B cell (primary cell): ENCODE measurements at regions of chr14 and their contacts with region 1.

Region 1: GRCh38 chr14:92680781-92681650 is 67.4 kb downstream of the LGMN start:
- DNase-seq: peak; percentile 87
- ATAC-seq: peak; percentile 16
- H3K4me3 ChIP-seq: no peak overlapping the region
- H3K4me3 Mint-ChIP-seq: no peak overlapping the region
- H3K27ac ChIP-seq: peak overlapping the region; percentile 52 to 66
- H3K27ac Mint-ChIP-seq: peak overlapping the region; percentile 86
- H3K4me1 ChIP-seq: peaks cover 31% of the 10 kb centered on the region in 2 donors
- H3K4me1 Mint-ChIP-seq: peaks cover 38% of the 10 kb centered on the region
- H3K27me3 ChIP-seq: no peaks in the 10 kb centered on the region
- H3K27me3 Mint-ChIP-seq: no peaks in the 10 kb centered on the region
- CTCF ChIP-seq: peak; percentile 97

Region 2: DNA sequence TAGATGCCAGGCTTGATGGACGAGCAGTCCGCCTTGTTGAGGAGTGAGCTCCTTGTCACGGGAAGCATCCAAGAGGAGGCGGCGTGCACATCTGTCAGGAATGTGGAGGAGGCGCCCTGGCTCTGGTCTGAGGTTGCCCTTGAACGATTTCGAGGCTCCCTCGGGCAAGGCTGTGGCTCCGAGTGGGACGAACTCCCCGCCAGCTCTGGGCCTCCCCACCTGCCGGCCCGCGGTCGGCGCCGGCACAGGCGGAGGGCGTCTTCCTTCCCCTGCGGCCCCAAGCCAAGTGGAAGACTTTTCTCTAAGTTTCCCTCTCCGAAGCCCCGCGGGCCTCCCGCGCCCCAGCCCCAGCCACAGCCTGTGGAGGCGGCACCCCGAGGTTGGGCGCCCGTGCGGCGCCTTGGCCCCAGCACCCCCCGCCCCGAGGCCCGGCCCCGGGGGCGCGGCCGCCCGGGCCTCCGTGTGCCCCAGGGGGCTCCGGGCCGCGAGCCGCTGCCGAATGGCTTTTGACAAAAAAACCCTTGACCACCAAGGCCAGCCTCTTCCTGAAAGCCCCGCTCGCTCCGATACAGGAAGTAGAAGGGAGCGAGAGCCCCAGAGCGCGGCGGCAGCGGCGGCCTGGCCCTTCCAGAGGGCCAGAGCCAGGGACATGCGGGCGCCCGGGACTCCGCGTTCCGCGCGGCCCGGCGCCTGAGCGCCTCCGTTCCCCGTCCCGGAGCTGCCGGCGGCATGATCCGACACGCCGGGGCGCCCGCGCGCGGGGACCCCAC is 167.6 kb before region 1 on chr14 and contains the start of gene RIN3:
- CTCF ChIA-PET with region 1: no interaction called
- POLR2A ChIA-PET with region 1: no interaction called
- intact Hi-C with region 1: loop called (anchors 1 kb)
- DNase-seq: peak; percentile 68
- ATAC-seq: peak; percentile 64
- H3K4me3 ChIP-seq: peak within 1 kb of the TSS; percentile 39 to 79 (median 72)
- H3K4me3 Mint-ChIP-seq: peak within 1 kb of the TSS; percentile 83
- H3K27ac ChIP-seq: peak within 1 kb of the TSS; percentile 55 to 67
- H3K27ac Mint-ChIP-seq: peak within 1 kb of the TSS; percentile 79
- H3K4me1 ChIP-seq: peaks cover 33 to 55% of the 10 kb centered on the region in 2 donors
- H3K4me1 Mint-ChIP-seq: peaks cover 54% of the 10 kb centered on the region
- H3K27me3 ChIP-seq: peaks cover 0 to 6% (median 0%) of the 10 kb centered on the region in 4 experiments
- H3K27me3 Mint-ChIP-seq: no peaks in the 10 kb centered on the region
- CTCF ChIP-seq: no peak
- total RNA-seq, gene RIN3: 123 and 124 TPM in 2 replicates

Region 3: GRCh38 chr14:92585981-92586937 is 94.8 kb before region 1 on chr14:
- CTCF ChIA-PET with region 1: interaction called, 94 read pairs
- POLR2A ChIA-PET with region 1: interaction called, 4 read pairs
- intact Hi-C with region 1: loop called (anchors 1 kb)
- DNase-seq: no peak
- ATAC-seq: no peak
- H3K4me3 ChIP-seq: no peak overlapping the region
- H3K4me3 Mint-ChIP-seq: peak overlapping the region; percentile 20
- H3K27ac ChIP-seq: peak overlapping the region in 1 of 2 donors; percentile 5
- H3K27ac Mint-ChIP-seq: peak overlapping the region; percentile 72
- H3K4me1 ChIP-seq: peaks cover 61 to 74% of the 10 kb centered on the region in 2 donors
- H3K4me1 Mint-ChIP-seq: peaks cover 77% of the 10 kb centered on the region
- H3K27me3 ChIP-seq: no peaks in the 10 kb centered on the region
- H3K27me3 Mint-ChIP-seq: no peaks in the 10 kb centered on the region
- CTCF ChIP-seq: no peak

Region 4: DNA sequence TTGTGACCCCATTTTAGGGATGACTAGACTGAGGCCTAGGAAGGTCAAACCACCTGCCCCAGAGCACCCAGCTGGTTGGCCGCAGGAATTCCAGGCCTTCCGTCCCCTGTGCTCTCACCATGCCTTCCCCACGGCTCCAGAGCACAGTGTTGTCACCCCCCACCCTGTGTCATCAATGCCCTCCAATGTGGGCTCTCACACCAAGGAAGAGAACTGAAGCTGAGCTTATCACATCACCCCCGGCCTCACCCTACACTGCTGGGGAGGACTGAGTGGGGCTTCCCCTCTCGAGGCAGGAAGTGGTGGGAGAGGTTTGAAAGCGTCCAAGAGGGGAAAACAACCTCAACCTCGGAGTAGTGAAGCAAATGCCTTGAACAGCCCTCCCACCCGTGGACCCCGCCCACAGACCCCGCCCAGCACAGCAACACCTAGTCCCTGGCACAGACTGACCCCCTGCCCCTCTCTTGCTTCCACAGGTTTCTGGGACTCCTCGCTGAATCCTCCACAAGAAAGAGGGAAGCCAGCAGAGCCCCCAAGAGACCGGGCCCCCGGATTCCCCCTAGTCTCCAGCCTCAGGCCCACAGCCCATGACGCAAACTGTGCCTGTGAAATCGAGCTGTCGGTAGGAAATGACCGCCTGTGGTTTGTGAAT is 29.8 kb before region 1 on chr14:
- CTCF ChIA-PET with region 1: interaction called, 25 read pairs
- POLR2A ChIA-PET with region 1: interaction called, 18 read pairs
- intact Hi-C with region 1: loop called (anchors 1 kb)
- DNase-seq: peak; percentile 89
- ATAC-seq: peak; percentile 74
- H3K4me3 ChIP-seq: peak overlapping the region; percentile 1 to 91 (median 80)
- H3K4me3 Mint-ChIP-seq: peak overlapping the region; percentile 100
- H3K27ac ChIP-seq: peak overlapping the region; percentile 82 to 92
- H3K27ac Mint-ChIP-seq: peak overlapping the region; percentile 97
- H3K4me1 ChIP-seq: peaks cover 50 to 85% of the 10 kb centered on the region in 2 donors
- H3K4me1 Mint-ChIP-seq: peaks cover 71% of the 10 kb centered on the region
- H3K27me3 ChIP-seq: no peaks in the 10 kb centered on the region
- H3K27me3 Mint-ChIP-seq: no peaks in the 10 kb centered on the region
- CTCF ChIP-seq: no peak

Region 5: DNA sequence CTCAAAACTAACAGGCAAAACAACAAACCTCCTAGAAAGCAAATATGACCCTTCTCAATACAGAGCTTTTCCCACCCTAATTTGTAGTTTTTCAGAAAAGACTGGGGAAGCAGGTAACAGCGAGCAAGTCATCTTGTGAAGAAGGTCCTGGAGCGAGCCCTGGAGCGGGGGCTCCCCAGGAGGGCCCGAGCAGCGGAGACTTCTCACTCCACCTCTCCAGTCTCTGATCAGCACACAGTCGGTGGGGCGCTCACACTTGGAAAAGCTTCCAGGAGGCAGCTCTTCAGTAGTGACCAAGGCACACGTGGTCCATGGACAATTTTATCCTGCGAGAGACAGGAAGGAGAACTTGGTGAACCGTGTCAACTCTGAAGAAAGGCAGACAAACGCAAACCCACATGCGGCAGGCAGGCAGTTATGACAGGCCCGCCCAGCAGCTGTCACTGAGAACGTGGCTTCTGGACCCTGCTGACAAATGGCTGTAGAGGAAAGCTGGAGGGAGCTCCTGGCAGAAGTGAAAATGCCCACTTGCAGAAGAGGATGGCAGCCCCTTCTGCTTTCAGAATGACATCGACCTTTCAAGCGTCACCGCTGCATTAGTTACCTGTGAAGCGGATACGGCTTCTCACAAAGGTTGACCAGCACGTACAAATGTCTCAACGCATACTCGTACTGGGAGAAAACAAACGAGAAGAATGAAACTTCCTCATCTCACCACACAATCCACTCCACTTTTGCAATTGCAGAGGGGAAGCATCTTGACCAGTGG is 23.2 kb after region 1 on chr14:
- CTCF ChIA-PET with region 1: interaction called, 10 read pairs
- POLR2A ChIA-PET with region 1: no interaction called
- intact Hi-C with region 1: loop called (anchors 1 kb)
- DNase-seq: peak; percentile 88
- ATAC-seq: peak; percentile 98
- H3K4me3 ChIP-seq: peak overlapping the region in 2 of 5 experiments; percentile 17 to 22
- H3K4me3 Mint-ChIP-seq: peak overlapping the region; percentile 78
- H3K27ac ChIP-seq: peak overlapping the region; percentile 71 to 91
- H3K27ac Mint-ChIP-seq: peak overlapping the region; percentile 86
- H3K4me1 ChIP-seq: peaks cover 40 to 50% of the 10 kb centered on the region in 2 donors
- H3K4me1 Mint-ChIP-seq: peaks cover 56% of the 10 kb centered on the region
- H3K27me3 ChIP-seq: no peaks in the 10 kb centered on the region
- H3K27me3 Mint-ChIP-seq: no peaks in the 10 kb centered on the region
- CTCF ChIP-seq: no peak

Region 6: DNA sequence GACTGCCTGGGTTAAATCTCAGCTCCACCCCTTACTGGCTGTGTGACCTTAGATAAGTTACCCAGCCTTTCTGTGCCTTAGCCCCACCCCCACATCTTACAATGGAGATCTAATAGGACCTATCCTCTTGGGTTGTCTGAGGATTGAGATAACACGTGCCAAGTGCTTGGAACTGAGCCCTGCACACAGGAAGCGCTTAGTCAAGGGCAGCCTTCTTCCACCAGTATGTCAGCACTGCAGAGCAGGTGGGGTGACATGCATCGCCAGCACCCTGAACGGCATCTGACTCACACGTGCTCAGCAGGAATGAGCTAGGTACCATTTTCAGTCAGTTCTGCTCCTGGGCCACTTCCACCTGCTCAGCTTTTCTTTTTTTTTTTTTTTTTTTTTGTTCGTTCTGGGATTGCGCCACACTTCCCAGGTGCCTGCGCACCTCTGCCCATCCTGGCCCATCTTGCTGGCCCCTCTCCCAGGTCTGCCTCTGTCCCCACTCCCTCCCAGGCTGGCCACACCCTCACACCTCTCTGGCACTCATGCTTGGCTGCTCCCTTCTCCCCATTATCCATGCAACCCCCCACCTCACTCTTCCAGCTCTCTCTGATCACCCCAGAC is 47.8 kb after region 1 on chr14:
- CTCF ChIA-PET with region 1: no interaction called
- POLR2A ChIA-PET with region 1: no interaction called
- intact Hi-C with region 1: no loop called
- DNase-seq: peak; percentile 44
- ATAC-seq: peak; percentile 53
- H3K4me3 ChIP-seq: no peak overlapping the region
- H3K4me3 Mint-ChIP-seq: no peak overlapping the region
- H3K27ac ChIP-seq: no peak overlapping the region
- H3K27ac Mint-ChIP-seq: no peak overlapping the region
- H3K4me1 ChIP-seq: peaks cover 0 to 6% of the 10 kb centered on the region in 2 donors
- H3K4me1 Mint-ChIP-seq: peaks cover 7% of the 10 kb centered on the region
- H3K27me3 ChIP-seq: no peaks in the 10 kb centered on the region
- H3K27me3 Mint-ChIP-seq: no peaks in the 10 kb centered on the region
- CTCF ChIP-seq: no peak